Colonic mucosa (tissue), 4 donors: ENCODE measurements at regions of chr1 and their contacts with region 1.

Region 1: GRCh38 chr1:16009030-16009709 is 5.1 kb downstream of the SRARP start:
- DNase-seq: peak; percentile 82
- H3K4me3 ChIP-seq: no peak overlapping the region
- H3K27ac ChIP-seq: no peak overlapping the region
- H3K4me1 ChIP-seq: peaks cover 4% of the 10 kb centered on the region
- H3K27me3 ChIP-seq: no peaks in the 10 kb centered on the region
- CTCF ChIP-seq: peak; percentile 94

Region 2: GRCh38 chr1:16032388-16033103 is 23.4 kb after region 1 on chr1:
- intact Hi-C with region 1: loop called (anchors 2 kb)
- DNase-seq: peak; percentile 83
- H3K4me3 ChIP-seq: no peak overlapping the region
- H3K27ac ChIP-seq: no peak overlapping the region
- H3K4me1 ChIP-seq: no peaks in the 10 kb centered on the region
- H3K27me3 ChIP-seq: no peaks in the 10 kb centered on the region
- CTCF ChIP-seq: peak; percentile 95

Region 3: DNA sequence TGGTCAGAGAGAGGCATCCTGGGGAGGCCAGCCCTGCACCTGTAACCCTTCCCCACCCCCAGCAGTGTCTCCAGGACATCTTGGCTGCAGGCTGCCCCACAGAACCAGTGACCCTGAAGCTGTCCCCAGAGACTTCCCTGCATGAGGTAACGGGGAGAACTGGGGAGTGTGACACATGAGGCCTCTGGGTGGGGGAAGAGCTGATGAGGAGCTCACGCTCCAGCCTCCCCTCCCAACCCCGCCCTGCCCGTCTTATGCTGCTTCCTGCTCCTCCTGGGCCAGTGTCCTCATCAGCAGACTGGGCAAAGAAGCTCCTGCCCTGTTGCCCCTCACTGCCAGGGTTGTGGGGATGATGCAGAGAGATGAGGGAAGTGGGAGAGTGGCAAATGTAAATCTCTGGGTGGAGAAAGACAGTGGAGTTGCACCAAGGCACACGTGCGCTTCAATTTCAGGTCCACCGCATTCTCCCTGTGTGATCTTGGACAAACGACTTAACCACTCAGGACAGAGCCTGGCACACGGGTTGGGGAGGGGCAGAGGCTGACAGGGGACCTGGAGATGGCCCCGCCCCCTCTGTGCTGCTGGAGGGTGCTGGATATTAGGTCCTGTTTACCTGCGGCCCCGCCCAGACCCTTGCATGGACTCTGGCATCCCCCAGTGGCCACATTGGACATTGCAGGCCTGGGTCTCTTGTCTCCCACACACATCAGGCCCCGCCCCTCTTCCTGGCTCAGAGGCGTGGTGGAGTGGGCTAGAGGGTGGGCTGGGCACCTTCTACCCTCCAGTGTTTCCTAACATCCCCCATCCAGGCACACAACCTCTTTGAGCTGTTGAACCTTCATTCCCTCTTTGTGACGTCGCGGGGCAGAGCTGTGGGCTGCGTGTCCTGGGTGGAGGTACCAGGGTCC is 46.7 kb after region 1 on chr1:
- intact Hi-C with region 1: loop called (anchors 2 kb)
- DNase-seq: peak; percentile 94
- H3K4me3 ChIP-seq: no peak overlapping the region
- H3K27ac ChIP-seq: no peak overlapping the region
- H3K4me1 ChIP-seq: no peaks in the 10 kb centered on the region
- H3K27me3 ChIP-seq: no peaks in the 10 kb centered on the region
- CTCF ChIP-seq: peak; percentile 96